B cell (primary cell): ENCODE measurements at regions of chr6 and their contacts with region 1.

Region 1: DNA sequence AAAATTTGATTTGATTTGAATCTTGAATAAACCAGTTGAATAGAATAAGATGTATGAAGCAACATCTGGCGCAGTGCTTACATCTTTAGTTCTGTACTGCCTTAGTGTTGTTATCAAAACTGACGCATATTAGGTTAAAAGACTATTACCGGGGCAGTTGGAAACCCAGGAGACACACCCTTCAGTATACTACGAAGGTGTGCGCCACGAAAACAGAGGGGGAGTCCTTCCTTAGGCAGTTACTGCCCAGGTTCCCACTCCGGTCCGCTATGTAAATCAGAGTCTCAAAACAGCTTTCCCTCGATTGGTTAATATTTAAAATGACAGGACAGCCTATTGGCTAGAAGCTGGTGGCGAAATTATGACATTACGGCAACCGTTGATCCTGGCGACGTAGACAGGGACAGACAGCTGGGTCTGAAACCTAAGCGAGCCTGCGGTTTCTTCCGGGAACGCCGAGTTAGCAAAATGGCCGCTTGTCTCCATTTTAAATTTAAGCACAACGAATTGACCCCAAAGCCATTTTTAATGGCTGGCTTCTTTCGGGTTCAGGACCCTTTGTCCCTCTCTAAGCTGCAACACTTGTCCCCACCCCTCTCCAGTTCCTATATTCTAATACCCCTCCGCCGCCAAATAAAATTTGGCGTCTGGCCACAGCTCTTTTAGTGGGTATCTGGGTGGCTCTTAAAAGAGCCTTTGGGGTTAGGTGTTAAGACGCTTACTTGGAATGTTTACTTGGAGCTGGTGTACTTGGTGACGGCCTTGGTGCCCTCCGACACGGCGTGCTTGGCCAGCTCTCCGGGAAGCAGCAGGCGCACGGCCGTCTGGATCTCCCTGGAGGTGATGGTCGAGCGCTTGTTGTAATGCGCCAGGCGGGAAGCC is 35.8 kb downstream of the HFE start:
- DNase-seq: peak; percentile 97
- ATAC-seq: peak; percentile 59
- H3K4me3 ChIP-seq: peak overlapping the region; percentile 87 to 100 (median 96)
- H3K4me3 Mint-ChIP-seq: peak overlapping the region; percentile 93
- H3K27ac ChIP-seq: peak overlapping the region; percentile 87 to 88
- H3K27ac Mint-ChIP-seq: peak overlapping the region; percentile 97
- H3K4me1 ChIP-seq: peaks cover 19 to 23% of the 10 kb centered on the region in 2 donors
- H3K4me1 Mint-ChIP-seq: peaks cover 26% of the 10 kb centered on the region
- H3K27me3 ChIP-seq: no peaks in the 10 kb centered on the region
- H3K27me3 Mint-ChIP-seq: no peaks in the 10 kb centered on the region
- CTCF ChIP-seq: no peak

Region 2: DNA sequence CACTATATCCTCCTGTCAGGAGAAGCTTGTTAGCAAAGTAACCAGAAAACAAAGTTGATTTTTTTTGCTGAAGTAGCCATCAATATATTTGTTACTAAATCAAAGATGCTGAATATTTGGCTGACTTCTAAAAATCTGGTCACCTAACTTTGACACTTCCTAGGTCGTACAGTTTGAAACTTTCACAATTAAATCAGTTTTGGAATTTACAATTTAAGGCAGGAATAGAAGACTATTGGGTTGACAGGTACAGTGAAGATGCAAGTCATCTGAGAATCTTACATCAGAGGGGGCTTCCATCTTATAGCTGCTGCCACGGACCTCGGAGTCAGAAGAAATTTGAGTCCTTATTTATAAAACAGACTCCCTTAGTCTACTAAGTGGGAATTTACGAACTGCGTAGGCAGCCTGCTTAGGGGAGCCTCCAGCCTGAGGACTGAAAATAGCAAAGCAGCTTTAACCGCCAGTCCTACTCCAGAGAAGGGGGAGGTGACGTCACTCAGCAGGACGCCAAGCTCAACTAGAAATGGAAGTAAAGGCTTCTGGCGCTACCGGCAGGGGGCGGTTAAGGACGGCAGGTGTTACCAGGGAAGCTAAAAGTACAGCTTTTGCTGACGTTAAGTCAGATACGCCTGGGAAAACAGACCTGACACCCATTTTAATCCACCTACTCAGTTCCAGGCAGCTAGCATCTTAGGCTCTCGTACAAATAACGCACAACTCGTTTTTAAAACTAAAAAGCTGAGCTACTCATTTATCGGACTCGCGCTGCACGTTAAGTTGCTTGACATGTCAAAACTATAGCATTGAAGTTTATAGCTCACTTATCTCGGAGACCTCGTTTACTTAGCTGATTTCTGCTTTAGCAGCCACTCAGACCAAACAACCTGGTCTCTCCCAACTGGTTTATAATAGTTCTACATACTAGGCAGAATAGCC is 96.9 kb before region 1 on chr6:
- CTCF ChIA-PET with region 1: interaction called, 19 read pairs
- POLR2A ChIA-PET with region 1: interaction called, 39 read pairs
- intact Hi-C with region 1: loop called (anchors 1 kb)
- DNase-seq: peak; percentile 97
- ATAC-seq: peak; percentile 35
- H3K4me3 ChIP-seq: peak overlapping the region; percentile 58 to 99 (median 88)
- H3K4me3 Mint-ChIP-seq: peak overlapping the region; percentile 98
- H3K27ac ChIP-seq: peak overlapping the region; percentile 88 to 97
- H3K27ac Mint-ChIP-seq: peak overlapping the region; percentile 98
- H3K4me1 ChIP-seq: peaks cover 23 to 32% of the 10 kb centered on the region in 2 donors
- H3K4me1 Mint-ChIP-seq: peaks cover 49% of the 10 kb centered on the region
- H3K27me3 ChIP-seq: no peaks in the 10 kb centered on the region
- H3K27me3 Mint-ChIP-seq: no peaks in the 10 kb centered on the region
- CTCF ChIP-seq: peak; percentile 92

Region 3: GRCh38 chr6:26054857-26055669 is 68.0 kb before region 1 on chr6:
- CTCF ChIA-PET with region 1: interaction called, 4 read pairs
- POLR2A ChIA-PET with region 1: interaction called, 64 read pairs
- intact Hi-C with region 1: loop called (anchors 1 kb)
- DNase-seq: peak; percentile 93
- ATAC-seq: peak; percentile 65
- H3K4me3 ChIP-seq: peak overlapping the region; percentile 69 to 100 (median 94)
- H3K4me3 Mint-ChIP-seq: peak overlapping the region; percentile 96
- H3K27ac ChIP-seq: peak overlapping the region; percentile 80 to 91
- H3K27ac Mint-ChIP-seq: peak overlapping the region; percentile 97
- H3K4me1 ChIP-seq: peaks cover 12 to 16% of the 10 kb centered on the region in 2 donors
- H3K4me1 Mint-ChIP-seq: peaks cover 15% of the 10 kb centered on the region
- H3K27me3 ChIP-seq: no peaks in the 10 kb centered on the region
- H3K27me3 Mint-ChIP-seq: no peaks in the 10 kb centered on the region
- CTCF ChIP-seq: no peak

Region 4: GRCh38 chr6:26175428-26176181 is 52.6 kb after region 1 on chr6:
- CTCF ChIA-PET with region 1: interaction called, 5 read pairs
- POLR2A ChIA-PET with region 1: interaction called, 48 read pairs
- intact Hi-C with region 1: loop called (anchors 1 kb)
- DNase-seq: peak; percentile 81
- ATAC-seq: no peak
- H3K4me3 ChIP-seq: no peak overlapping the region
- H3K4me3 Mint-ChIP-seq: peak overlapping the region; percentile 21
- H3K27ac ChIP-seq: no peak overlapping the region
- H3K27ac Mint-ChIP-seq: peak overlapping the region; percentile 85
- H3K4me1 ChIP-seq: peaks cover 21 to 26% of the 10 kb centered on the region in 2 donors
- H3K4me1 Mint-ChIP-seq: peaks cover 29% of the 10 kb centered on the region
- H3K27me3 ChIP-seq: no peaks in the 10 kb centered on the region
- H3K27me3 Mint-ChIP-seq: no peaks in the 10 kb centered on the region
- CTCF ChIP-seq: peak; percentile 93

Region 5: GRCh38 chr6:26234421-26235296 is 111.6 kb after region 1 on chr6:
- CTCF ChIA-PET with region 1: no interaction called
- POLR2A ChIA-PET with region 1: interaction called, 34 read pairs
- intact Hi-C with region 1: no loop called
- DNase-seq: peak; percentile 87
- ATAC-seq: peak; percentile 76
- H3K4me3 ChIP-seq: peak overlapping the region; percentile 70 to 99 (median 85)
- H3K4me3 Mint-ChIP-seq: peak overlapping the region; percentile 93
- H3K27ac ChIP-seq: peak overlapping the region; percentile 86 to 90
- H3K27ac Mint-ChIP-seq: peak overlapping the region; percentile 95
- H3K4me1 ChIP-seq: peaks cover 13 to 21% of the 10 kb centered on the region in 2 donors
- H3K4me1 Mint-ChIP-seq: peaks cover 23% of the 10 kb centered on the region
- H3K27me3 ChIP-seq: no peaks in the 10 kb centered on the region
- H3K27me3 Mint-ChIP-seq: no peaks in the 10 kb centered on the region
- CTCF ChIP-seq: no peak

Region 6: GRCh38 chr6:26285143-26286134 is 162.4 kb after region 1 on chr6:
- CTCF ChIA-PET with region 1: no interaction called
- POLR2A ChIA-PET with region 1: interaction called, 17 read pairs
- intact Hi-C with region 1: loop called (anchors 1 kb)
- DNase-seq: peak; percentile 99
- ATAC-seq: peak; percentile 76
- H3K4me3 ChIP-seq: peak overlapping the region; percentile 52 to 99 (median 71)
- H3K4me3 Mint-ChIP-seq: peak overlapping the region; percentile 90
- H3K27ac ChIP-seq: peak overlapping the region; percentile 93 to 97
- H3K27ac Mint-ChIP-seq: peak overlapping the region; percentile 95
- H3K4me1 ChIP-seq: peaks cover 17 to 18% of the 10 kb centered on the region in 2 donors
- H3K4me1 Mint-ChIP-seq: peaks cover 33% of the 10 kb centered on the region
- H3K27me3 ChIP-seq: no peaks in the 10 kb centered on the region
- H3K27me3 Mint-ChIP-seq: peaks cover 3% of the 10 kb centered on the region
- CTCF ChIP-seq: no peak